Activated naive CD4-positive, alpha-beta T cell treated with anti-CD3 and anti-CD28 coated beads, Interleukin-2, amount 10 ng/mL, durations not matched to agents 7 days and 5 days (primary cell): ENCODE measurements at regions of chr20 and their contacts with region 1.

Region 1: GRCh38 chr20:59495894-59496510 is 108.3 kb upstream of the PHACTR3 start:
- DNase-seq: peak; percentile 81
- H3K4me3 Mint-ChIP-seq: no peak overlapping the region
- H3K27ac Mint-ChIP-seq: no peak overlapping the region
- H3K4me1 Mint-ChIP-seq: no peaks in the 10 kb centered on the region
- H3K27me3 Mint-ChIP-seq: peaks cover 39% of the 10 kb centered on the region

Region 2: GRCh38 chr20:58870239-58871014 is 625.6 kb before region 1 on chr20:
- CTCF ChIA-PET with region 1: interaction called, 10 read pairs
- DNase-seq: peak; percentile 69
- H3K4me3 Mint-ChIP-seq: no peak overlapping the region
- H3K27ac Mint-ChIP-seq: no peak overlapping the region
- H3K4me1 Mint-ChIP-seq: peaks cover 12% of the 10 kb centered on the region
- H3K27me3 Mint-ChIP-seq: peaks cover 41% of the 10 kb centered on the region

Region 3: GRCh38 chr20:59485576-59486454 is 10.2 kb before region 1 on chr20:
- CTCF ChIA-PET with region 1: interaction called, 10 read pairs
- DNase-seq: no peak
- H3K4me3 Mint-ChIP-seq: no peak overlapping the region
- H3K27ac Mint-ChIP-seq: no peak overlapping the region
- H3K4me1 Mint-ChIP-seq: peaks cover 3% of the 10 kb centered on the region
- H3K27me3 Mint-ChIP-seq: peaks cover 14% of the 10 kb centered on the region